ENCODE measurements at regions of chr12 and their contacts with region 1.

Region 1: DNA sequence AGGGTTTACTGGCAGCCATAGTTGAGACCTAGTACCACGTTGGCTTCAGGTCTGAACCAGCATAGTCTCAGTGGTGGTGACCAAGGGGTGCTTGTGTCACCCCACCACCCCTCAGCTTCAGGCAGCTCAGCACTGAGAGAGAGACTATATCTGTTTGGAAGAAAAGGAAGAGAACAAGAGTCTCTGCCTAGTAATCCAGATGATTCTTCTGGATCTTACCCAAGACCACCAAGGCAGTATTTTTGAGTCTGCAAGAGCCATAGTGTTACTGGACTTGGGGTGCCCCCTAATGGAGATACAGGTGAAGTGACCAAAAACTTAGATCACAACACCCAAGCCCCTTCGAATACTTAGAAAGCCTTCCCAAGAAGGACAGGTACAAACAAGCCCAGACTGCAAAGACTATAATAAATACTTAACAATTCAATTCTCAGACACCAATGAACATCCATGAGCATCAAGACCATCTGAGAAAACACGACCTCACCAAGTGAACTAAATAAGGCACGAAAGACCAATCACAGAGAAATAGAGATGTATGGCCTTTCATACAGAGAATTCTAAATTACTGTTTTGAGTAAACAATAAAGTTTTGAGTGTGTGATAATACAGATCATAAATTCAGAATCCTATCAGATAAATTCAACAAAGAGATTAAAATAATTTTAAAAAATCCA is 107.0 kb downstream of the HELB start:
- DNase-seq: peak in 8 of 9 donors; percentile 26 to 67 (median 58)
- ATAC-seq: peak; percentile 61
- H3K4me3 ChIP-seq: no peak overlapping the region
- H3K4me3 Mint-ChIP-seq: no peak overlapping the region
- H3K27ac ChIP-seq: no peak overlapping the region
- H3K27ac Mint-ChIP-seq: peak overlapping the region in 1 of 9 donors; percentile 46
- H3K4me1 ChIP-seq: no peaks in the 10 kb centered on the region
- H3K4me1 Mint-ChIP-seq: peaks cover 0 to 7% (median 0%) of the 10 kb centered on the region in 7 donors
- H3K27me3 ChIP-seq: no peaks in the 10 kb centered on the region
- H3K27me3 Mint-ChIP-seq: peaks cover 4 to 26% (median 14%) of the 10 kb centered on the region in 5 donors

Region 2: GRCh38 chr12:64890873-64891468 is 1518.4 kb before region 1 on chr12:
- CTCF ChIA-PET with region 1: interaction called, 3 read pairs
- POLR2A ChIA-PET with region 1: no interaction called
- intact Hi-C with region 1: loop called in 1 of 2 experiments (anchors 10 kb)
- DNase-seq: peak in 7 of 9 donors; percentile 16 to 61 (median 51)
- ATAC-seq: peak; percentile 60
- H3K4me3 ChIP-seq: no peak overlapping the region
- H3K4me3 Mint-ChIP-seq: no peak overlapping the region
- H3K27ac ChIP-seq: no peak overlapping the region
- H3K27ac Mint-ChIP-seq: no peak overlapping the region
- H3K4me1 ChIP-seq: no peaks in the 10 kb centered on the region
- H3K4me1 Mint-ChIP-seq: peaks cover 0 to 2% (median 0%) of the 10 kb centered on the region in 7 donors
- H3K27me3 ChIP-seq: no peaks in the 10 kb centered on the region
- H3K27me3 Mint-ChIP-seq: peaks cover 8 to 17% (median 15%) of the 10 kb centered on the region in 5 donors

Region 3: DNA sequence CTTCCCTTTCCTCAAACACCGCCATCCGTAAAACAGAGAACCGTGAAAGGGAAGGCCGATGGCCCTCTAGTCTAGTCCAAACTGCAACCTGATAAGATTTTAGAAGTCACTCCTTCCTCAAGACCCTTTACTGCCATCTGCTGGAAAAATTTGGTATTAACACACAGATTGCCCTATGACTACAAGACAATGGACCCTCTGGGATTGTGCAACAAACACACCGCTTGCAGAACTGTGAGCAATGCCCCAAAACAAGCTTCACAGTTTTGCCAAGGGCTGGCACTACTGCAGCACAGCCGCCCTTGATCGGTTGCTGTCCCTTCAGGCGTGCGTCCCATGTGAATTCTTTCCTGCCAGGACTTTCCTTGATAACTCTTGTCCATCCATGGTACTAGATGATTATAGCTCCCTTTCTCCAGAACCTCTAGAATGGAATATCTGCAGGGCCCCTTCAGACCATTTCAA is 301.9 kb before region 1 on chr12:
- CTCF ChIA-PET with region 1: interaction called, 3 read pairs
- POLR2A ChIA-PET with region 1: no interaction called
- intact Hi-C with region 1: loop called in 1 of 2 experiments (anchors 1 kb)
- DNase-seq: peak in 8 of 9 donors; percentile 37 to 78 (median 67)
- ATAC-seq: peak; percentile 93
- H3K4me3 ChIP-seq: no peak overlapping the region
- H3K4me3 Mint-ChIP-seq: no peak overlapping the region
- H3K27ac ChIP-seq: no peak overlapping the region
- H3K27ac Mint-ChIP-seq: no peak overlapping the region
- H3K4me1 ChIP-seq: no peaks in the 10 kb centered on the region
- H3K4me1 Mint-ChIP-seq: peaks cover 2 to 12% (median 4%) of the 10 kb centered on the region in 7 donors
- H3K27me3 ChIP-seq: no peaks in the 10 kb centered on the region
- H3K27me3 Mint-ChIP-seq: peaks cover 6 to 23% (median 20%) of the 10 kb centered on the region in 5 donors

Region 4: DNA sequence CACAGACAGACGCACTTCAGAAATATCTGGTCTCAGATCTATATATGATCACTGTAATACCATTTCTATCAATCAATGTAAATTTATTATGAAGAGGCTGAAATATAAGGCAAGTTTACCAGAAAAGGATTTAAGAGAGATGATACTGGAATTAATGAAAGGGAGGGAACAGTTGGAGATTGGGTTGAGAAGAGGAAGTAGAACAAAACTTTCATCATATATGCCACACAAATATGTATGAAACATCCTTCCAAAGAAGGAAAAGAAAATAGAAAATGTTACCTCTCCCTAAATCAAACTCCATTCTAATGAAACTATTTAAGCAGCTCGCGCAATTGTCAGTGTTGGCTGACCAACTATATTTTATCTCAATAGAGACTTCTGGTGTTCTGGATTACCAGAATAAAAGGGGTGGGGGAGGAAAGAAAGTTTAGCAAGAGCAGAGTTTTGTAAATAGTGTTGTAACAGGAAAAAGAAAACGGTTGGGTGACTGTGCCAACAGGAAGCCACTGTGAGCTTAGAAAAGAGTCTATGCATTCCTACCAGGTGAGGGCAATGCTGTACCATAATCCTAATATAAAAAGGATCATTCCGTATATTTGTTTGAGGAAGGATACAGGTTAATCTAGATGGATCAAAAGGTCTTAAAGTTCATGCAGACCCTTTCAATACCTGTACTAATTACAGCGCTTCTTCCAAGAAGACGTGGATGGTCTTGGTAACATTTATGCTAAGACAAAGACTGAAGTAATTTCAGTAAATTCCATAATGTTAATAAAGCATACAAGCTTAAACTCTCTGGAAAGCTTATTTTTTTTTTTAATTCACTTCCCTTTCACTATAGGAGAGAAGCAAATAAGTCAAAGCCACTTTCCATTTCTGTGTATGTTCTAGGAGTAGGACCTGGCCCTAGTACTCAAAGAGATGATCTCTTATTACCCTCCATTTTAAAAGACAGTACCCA is 264.3 kb before region 1 on chr12:
- CTCF ChIA-PET with region 1: interaction called, 3 read pairs
- POLR2A ChIA-PET with region 1: no interaction called
- intact Hi-C with region 1: loop called (anchors 1 kb)
- DNase-seq: peak in 4 of 9 donors; percentile 10 to 32 (median 14)
- ATAC-seq: peak; percentile 86
- H3K4me3 ChIP-seq: no peak overlapping the region
- H3K4me3 Mint-ChIP-seq: peak overlapping the region in 1 of 10 donors; percentile 15
- H3K27ac ChIP-seq: no peak overlapping the region
- H3K27ac Mint-ChIP-seq: peak overlapping the region; percentile 3 to 86 (median 66)
- H3K4me1 ChIP-seq: peaks cover 0 to 3% of the 10 kb centered on the region in 2 donors
- H3K4me1 Mint-ChIP-seq: peaks cover 4 to 35% (median 30%) of the 10 kb centered on the region in 7 donors
- H3K27me3 ChIP-seq: no peaks in the 10 kb centered on the region
- H3K27me3 Mint-ChIP-seq: no peaks in the 10 kb centered on the region

Region 5: DNA sequence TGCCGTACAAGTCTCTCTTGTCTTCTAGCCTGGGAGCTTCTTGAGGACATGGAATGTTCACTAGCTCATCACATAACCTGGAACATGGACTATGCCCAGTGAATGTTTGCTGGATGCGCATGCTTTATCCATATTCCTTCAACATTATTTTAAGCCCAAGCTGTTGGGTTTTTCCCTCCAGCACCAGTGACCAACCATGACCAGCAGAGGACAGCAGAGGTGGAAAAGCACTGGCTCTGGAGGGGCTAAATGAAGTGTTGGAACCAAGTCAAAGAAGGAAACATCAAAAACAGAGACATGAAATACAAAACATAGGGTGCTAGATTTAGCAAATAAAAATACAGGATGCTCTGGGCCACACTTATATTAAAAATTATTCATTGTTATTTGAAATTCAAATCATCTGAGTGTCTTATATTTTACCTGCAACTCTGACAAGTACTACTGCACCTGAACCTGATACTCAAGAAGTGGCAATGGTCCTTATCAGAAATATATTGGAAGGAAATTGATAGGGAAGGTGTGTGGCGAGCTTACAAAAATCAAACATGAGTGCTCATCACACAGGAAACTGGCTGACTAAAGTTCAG is 130.1 kb before region 1 on chr12:
- CTCF ChIA-PET with region 1: interaction called, 21 read pairs
- POLR2A ChIA-PET with region 1: no interaction called
- intact Hi-C with region 1: loop called in 1 of 2 experiments (anchors 1 kb)
- DNase-seq: peak in 6 of 9 donors; percentile 33 to 58 (median 52)
- ATAC-seq: peak; percentile 76
- H3K4me3 ChIP-seq: no peak overlapping the region
- H3K4me3 Mint-ChIP-seq: peak overlapping the region in 8 of 10 donors; percentile 2 to 67 (median 20)
- H3K27ac ChIP-seq: no peak overlapping the region
- H3K27ac Mint-ChIP-seq: peak overlapping the region in 4 of 9 donors; percentile 22 to 78 (median 49)
- H3K4me1 ChIP-seq: peaks cover 17 to 38% of the 10 kb centered on the region in 2 donors
- H3K4me1 Mint-ChIP-seq: peaks cover 33 to 70% (median 52%) of the 10 kb centered on the region in 7 donors
- H3K27me3 ChIP-seq: no peaks in the 10 kb centered on the region
- H3K27me3 Mint-ChIP-seq: no peaks in the 10 kb centered on the region